Sigmoid colon (tissue), 7 donors: ENCODE measurements at regions of chr4 and their contacts with region 1.

Region 1: DNA sequence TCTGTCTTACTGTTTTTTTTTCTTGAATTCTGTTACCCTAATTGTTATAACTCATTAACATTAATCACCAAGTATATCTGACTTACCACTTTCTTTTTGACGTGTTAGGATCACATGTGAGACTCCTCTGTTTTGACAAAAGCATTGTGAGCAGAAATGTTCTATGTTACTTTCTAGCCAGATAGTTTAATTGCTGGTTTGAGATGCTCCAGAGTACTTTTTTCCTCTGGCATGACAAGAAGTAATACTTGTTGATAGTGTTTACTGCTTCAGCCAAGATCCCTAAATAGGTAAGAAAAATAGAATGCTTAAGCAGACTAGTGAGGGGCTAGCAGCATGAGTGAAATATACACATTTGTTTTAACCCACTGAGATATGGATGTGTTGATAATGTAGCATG is 303.9 kb upstream of the PABPC4L start:
- DNase-seq: no peak
- H3K4me3 ChIP-seq: no peak overlapping the region
- H3K27ac ChIP-seq: peak overlapping the region in 3 of 4 donors; percentile 22 to 55 (median 32)
- H3K4me1 ChIP-seq: peaks cover 0 to 16% (median 6%) of the 10 kb centered on the region in 4 donors
- H3K27me3 ChIP-seq: no peaks in the 10 kb centered on the region
- CTCF ChIP-seq: no peak
- EP300 ChIP-seq: peak in 3 of 4 donors; percentile 45 to 84 (median 60)
- POLR2A ChIP-seq: no peak

Region 2: GRCh38 chr4:134365852-134366251 is 139.7 kb before region 1 on chr4:
- intact Hi-C with region 1: no loop called
- DNase-seq: no peak
- H3K4me3 ChIP-seq: no peak overlapping the region
- H3K27ac ChIP-seq: no peak overlapping the region
- H3K4me1 ChIP-seq: no peaks in the 10 kb centered on the region
- H3K27me3 ChIP-seq: no peaks in the 10 kb centered on the region
- CTCF ChIP-seq: no peak
- EP300 ChIP-seq: no peak
- POLR2A ChIP-seq: no peak

Region 3: GRCh38 chr4:134544303-134544761 is 38.8 kb after region 1 on chr4:
- intact Hi-C with region 1: loop called (anchors 5 kb)
- DNase-seq: peak; percentile 74
- H3K4me3 ChIP-seq: no peak overlapping the region
- H3K27ac ChIP-seq: peak overlapping the region in 2 of 4 donors; percentile 35 to 57
- H3K4me1 ChIP-seq: peaks cover 0 to 38% (median 20%) of the 10 kb centered on the region in 4 donors
- H3K27me3 ChIP-seq: no peaks in the 10 kb centered on the region
- CTCF ChIP-seq: no peak
- EP300 ChIP-seq: peak in 2 of 4 donors; percentile 38 to 58
- POLR2A ChIP-seq: no peak